ENCODE measurements at regions of chr4 and their contacts with region 1.

Region 1: GRCh38 chr4:151015459-151016347 is 619 bp upstream of the LRBA start:
- DNase-seq: no peak
- ATAC-seq: peak; percentile 80
- H3K4me3 ChIP-seq: peak overlapping the region; percentile 100
- H3K27ac ChIP-seq: peak overlapping the region; percentile 92
- H3K4me1 ChIP-seq: peaks cover 4% of the 10 kb centered on the region
- H3K27me3 ChIP-seq: no peaks in the 10 kb centered on the region
- CTCF ChIP-seq: no peak
- EP300 ChIP-seq: no peak
- POLR2A ChIP-seq: peak; percentile 96
- RAD21 ChIP-seq: no peak

Region 2: DNA sequence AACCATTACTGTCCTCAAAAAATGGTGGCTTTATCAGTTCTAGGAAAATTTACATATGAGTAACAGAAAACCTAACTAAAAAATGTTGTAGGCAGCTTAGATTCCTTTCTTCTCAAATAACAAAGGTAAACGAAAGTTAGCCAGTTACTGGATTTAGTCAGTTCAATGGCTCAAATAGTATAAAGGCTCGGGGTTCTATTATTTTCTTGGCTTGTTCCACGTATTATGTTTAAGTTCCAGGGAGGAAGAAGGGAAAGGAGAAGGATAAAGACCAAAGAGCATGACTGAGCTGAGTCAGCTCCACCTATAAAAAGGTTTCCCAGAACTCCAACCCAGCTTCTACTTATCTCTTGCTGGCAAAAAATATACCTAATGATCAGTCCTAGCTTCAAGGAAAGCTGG is 474.7 kb before region 1 on chr4:
- CTCF ChIA-PET with region 1: no interaction called
- POLR2A ChIA-PET with region 1: no interaction called
- RAD21 ChIA-PET with region 1: no interaction called
- SMC1A ChIA-PET with region 1: no interaction called
- in situ Hi-C with region 1: no loop called
- intact Hi-C with region 1: no loop called
- DNase-seq: no peak
- ATAC-seq: no peak
- H3K4me3 ChIP-seq: no peak overlapping the region
- H3K27ac ChIP-seq: no peak overlapping the region
- H3K4me1 ChIP-seq: no peaks in the 10 kb centered on the region
- H3K27me3 ChIP-seq: no peaks in the 10 kb centered on the region
- CTCF ChIP-seq: no peak
- EP300 ChIP-seq: no peak
- POLR2A ChIP-seq: no peak
- RAD21 ChIP-seq: no peak

Region 3: DNA sequence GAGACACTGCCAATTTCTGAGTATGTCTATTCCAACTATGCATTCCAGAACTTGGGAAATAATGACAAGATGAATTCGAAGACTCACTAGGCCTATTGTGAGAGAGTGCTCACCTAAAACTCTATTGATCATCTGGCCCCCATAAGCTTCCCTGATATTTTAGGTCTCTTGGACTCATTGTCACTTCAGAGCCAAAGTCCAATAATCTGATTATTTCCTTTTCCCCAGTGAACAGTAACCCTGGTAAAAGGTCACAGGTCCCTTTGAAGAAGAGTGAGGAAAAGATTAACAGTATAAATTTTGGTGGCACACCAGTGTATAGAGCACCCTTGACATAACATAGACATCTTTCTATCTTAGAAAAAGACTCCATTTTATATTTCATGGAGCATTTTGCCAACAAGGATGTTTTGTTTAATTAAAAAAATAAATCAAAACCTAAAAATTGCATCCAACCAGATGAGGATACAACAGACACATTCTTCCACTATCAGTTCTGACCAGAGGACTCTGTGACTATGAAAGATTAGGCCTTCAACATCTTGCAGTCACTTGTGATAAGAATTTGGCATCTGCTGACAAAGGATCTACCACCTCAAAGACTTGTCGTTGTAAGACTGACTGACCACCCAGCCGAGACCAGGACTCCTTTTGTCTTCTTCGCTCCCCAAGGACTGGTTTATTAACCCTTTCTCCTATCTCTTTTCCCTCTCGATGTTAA is 241.8 kb before region 1 on chr4:
- CTCF ChIA-PET with region 1: no interaction called
- POLR2A ChIA-PET with region 1: no interaction called
- RAD21 ChIA-PET with region 1: no interaction called
- SMC1A ChIA-PET with region 1: no interaction called
- in situ Hi-C with region 1: no loop called
- intact Hi-C with region 1: no loop called
- DNase-seq: no peak
- ATAC-seq: no peak
- H3K4me3 ChIP-seq: no peak overlapping the region
- H3K27ac ChIP-seq: no peak overlapping the region
- H3K4me1 ChIP-seq: no peaks in the 10 kb centered on the region
- H3K27me3 ChIP-seq: no peaks in the 10 kb centered on the region
- CTCF ChIP-seq: no peak
- EP300 ChIP-seq: no peak
- POLR2A ChIP-seq: no peak
- RAD21 ChIP-seq: no peak

Region 4: DNA sequence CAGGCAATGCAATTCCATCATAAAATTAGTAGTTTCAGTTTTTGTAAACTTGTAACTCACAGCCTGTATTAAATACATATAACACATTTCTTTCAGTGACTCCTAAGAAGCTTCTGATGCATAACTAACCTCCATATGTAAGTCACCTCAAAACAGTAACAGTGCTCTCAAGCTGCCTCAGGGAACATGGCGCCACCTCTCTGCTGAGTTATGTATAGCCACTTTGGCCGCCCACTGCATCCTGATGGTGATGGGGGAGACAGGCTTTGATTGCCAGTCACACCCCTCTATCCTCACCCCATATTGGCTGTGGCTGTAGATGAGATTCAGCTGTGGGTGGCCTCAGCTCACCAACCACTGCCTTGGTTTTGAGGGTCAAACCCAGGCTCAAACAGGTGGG is 54.9 kb before region 1 on chr4:
- CTCF ChIA-PET with region 1: interaction called, 21 read pairs
- POLR2A ChIA-PET with region 1: interaction called, 7 read pairs
- RAD21 ChIA-PET with region 1: interaction called, 36 read pairs
- SMC1A ChIA-PET with region 1: interaction called, 10 read pairs
- in situ Hi-C with region 1: no loop called
- intact Hi-C with region 1: no loop called
- DNase-seq: no peak
- ATAC-seq: peak; percentile 86
- H3K4me3 ChIP-seq: no peak overlapping the region
- H3K27ac ChIP-seq: no peak overlapping the region
- H3K4me1 ChIP-seq: peaks cover 3% of the 10 kb centered on the region
- H3K27me3 ChIP-seq: no peaks in the 10 kb centered on the region
- CTCF ChIP-seq: peak; percentile 34 to 47 (median 45); a peak in 5 of 6 replicates
- EP300 ChIP-seq: no peak
- POLR2A ChIP-seq: no peak
- RAD21 ChIP-seq: peak; percentile 46; the same call in 1 of the 2 replicates

Region 5: DNA sequence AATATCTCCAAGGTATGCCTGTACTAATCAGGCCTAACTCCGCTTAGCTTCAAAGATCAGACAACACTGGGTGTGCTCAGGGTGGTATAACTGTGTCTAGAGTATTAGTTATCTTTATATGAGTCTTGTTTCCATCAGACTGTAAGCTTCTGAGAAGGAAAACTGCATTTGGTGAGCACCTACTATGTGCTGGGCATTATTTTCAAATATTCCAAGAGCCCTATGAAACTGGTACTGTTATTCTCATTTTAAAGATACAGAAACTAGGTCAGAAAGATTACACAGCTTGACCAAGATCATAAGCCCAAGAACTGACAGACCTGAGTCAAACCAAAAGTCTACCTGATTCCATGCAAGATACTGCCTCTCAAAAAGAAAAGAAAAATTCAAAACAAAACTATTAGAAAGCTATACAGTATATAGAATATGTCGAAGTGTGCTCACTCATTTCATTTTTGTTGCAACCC is 45.0 kb before region 1 on chr4:
- CTCF ChIA-PET with region 1: interaction called, 3 read pairs
- POLR2A ChIA-PET with region 1: interaction called, 5 read pairs
- RAD21 ChIA-PET with region 1: interaction called, 5 read pairs
- SMC1A ChIA-PET with region 1: interaction called, 17 read pairs
- in situ Hi-C with region 1: no loop called
- intact Hi-C with region 1: no loop called
- DNase-seq: no peak
- ATAC-seq: peak; percentile 78
- H3K4me3 ChIP-seq: 0 out of 2 replicates have a peak overlapping the region, but pooled peaks have one; percentile 32
- H3K27ac ChIP-seq: no peak overlapping the region
- H3K4me1 ChIP-seq: peaks cover 29% of the 10 kb centered on the region
- H3K27me3 ChIP-seq: no peaks in the 10 kb centered on the region
- CTCF ChIP-seq: no peak
- EP300 ChIP-seq: no peak
- POLR2A ChIP-seq: no peak
- RAD21 ChIP-seq: no peak

Region 6: DNA sequence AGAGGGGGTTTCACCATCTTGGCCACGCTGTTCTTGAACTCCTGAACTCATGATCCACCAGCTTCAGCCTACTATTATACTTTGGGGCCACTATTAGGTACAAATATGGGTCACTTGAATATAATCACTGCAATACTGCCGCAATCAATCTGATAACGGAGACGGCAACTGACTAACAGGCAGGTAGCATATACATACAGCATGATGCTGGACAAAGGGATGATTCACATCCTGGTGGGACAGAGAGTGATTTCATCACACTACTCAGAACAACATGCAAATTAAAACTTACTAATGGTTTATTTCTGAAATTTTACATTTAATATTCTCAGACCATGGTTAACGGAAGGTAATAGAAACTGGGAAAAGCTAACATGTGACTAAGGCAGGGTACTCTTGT is 11.5 kb before region 1 on chr4:
- CTCF ChIA-PET with region 1: no interaction called
- POLR2A ChIA-PET with region 1: interaction called, 22 read pairs
- RAD21 ChIA-PET with region 1: interaction called, 3 read pairs
- SMC1A ChIA-PET with region 1: interaction called, 3 read pairs
- in situ Hi-C with region 1: no loop called
- intact Hi-C with region 1: no loop called
- DNase-seq: no peak
- ATAC-seq: peak; percentile 16
- H3K4me3 ChIP-seq: no peak overlapping the region
- H3K27ac ChIP-seq: no peak overlapping the region
- H3K4me1 ChIP-seq: peaks cover 2% of the 10 kb centered on the region; the same call in 1 of the 2 replicates
- H3K27me3 ChIP-seq: no peaks in the 10 kb centered on the region
- CTCF ChIP-seq: no peak
- EP300 ChIP-seq: no peak
- POLR2A ChIP-seq: no peak
- RAD21 ChIP-seq: no peak

Region 7: GRCh38 chr4:151031831-151032605 is 16.3 kb after region 1 on chr4:
- CTCF ChIA-PET with region 1: interaction called, 6 read pairs
- POLR2A ChIA-PET with region 1: interaction called, 41 read pairs
- RAD21 ChIA-PET with region 1: interaction called, 33 read pairs
- SMC1A ChIA-PET with region 1: interaction called, 31 read pairs
- in situ Hi-C with region 1: no loop called
- intact Hi-C with region 1: no loop called
- DNase-seq: peak; percentile 54
- ATAC-seq: peak; percentile 69
- H3K4me3 ChIP-seq: peak overlapping the region; percentile 38; the same call in 1 of the 2 replicates
- H3K27ac ChIP-seq: peak overlapping the region; percentile 60
- H3K4me1 ChIP-seq: peaks cover 18% of the 10 kb centered on the region
- H3K27me3 ChIP-seq: no peaks in the 10 kb centered on the region
- CTCF ChIP-seq: no peak
- EP300 ChIP-seq: peak; percentile 75 to 82; a peak in 2 of 4 replicates
- POLR2A ChIP-seq: no peak
- RAD21 ChIP-seq: no peak

Region 8: DNA sequence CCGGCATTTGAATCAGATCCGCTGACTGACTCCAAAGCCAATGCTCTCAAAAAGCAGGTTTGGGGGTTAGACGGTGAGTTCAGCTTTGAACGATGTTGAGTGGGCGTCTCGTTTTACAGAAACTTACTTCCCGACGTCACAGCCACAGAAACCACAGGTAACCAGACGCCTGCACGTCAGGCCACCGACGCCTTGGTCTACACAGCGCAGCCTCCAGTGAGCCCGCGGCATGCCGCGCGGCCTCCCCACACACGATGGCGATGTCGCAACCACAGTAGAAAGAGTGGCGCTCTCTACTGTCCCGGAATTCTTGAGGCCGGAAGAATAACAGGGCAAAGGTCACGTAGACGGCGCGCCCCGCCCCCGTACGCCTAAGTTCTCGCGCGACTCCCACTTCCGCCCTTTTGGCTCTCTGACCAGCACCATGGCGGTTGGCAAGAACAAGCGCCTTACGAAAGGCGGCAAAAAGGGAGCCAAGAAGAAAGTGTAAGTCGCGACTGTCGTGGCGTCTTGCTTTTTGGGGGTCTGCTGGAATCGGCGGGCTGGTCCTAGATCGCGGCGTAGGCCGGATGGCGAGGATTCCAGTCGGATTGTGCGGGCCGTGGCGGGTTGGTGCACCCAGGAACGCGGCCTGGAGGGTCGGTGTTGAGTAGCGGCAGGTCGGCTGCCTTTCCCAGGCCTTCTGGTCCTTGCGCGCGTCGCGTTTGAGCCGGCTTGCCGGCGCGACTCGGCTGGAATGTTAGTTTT is 83.7 kb after region 1 on chr4 and contains the start of gene RPS3A:
- CTCF ChIA-PET with region 1: interaction called, 7 read pairs
- POLR2A ChIA-PET with region 1: interaction called, 17 read pairs
- RAD21 ChIA-PET with region 1: interaction called, 6 read pairs
- SMC1A ChIA-PET with region 1: interaction called, 8 read pairs
- in situ Hi-C with region 1: no loop called
- intact Hi-C with region 1: loop called (anchors 1 kb)
- DNase-seq: peak; percentile 97
- ATAC-seq: peak; percentile 89
- H3K4me3 ChIP-seq: peak within 1 kb of the TSS; percentile 98
- H3K27ac ChIP-seq: peak within 1 kb of the TSS; percentile 78
- H3K4me1 ChIP-seq: peaks cover 23% of the 10 kb centered on the region
- H3K27me3 ChIP-seq: no peaks in the 10 kb centered on the region
- CTCF ChIP-seq: peak; percentile 75 to 90 (median 83)
- EP300 ChIP-seq: peak; percentile 89 to 91
- POLR2A ChIP-seq: peak; percentile 100
- RAD21 ChIP-seq: peak; percentile 35
- polyA plus RNA-seq, gene RPS3A: 5,081 to 5,756 TPM

Region 9: GRCh38 chr4:151184523-151185458 is 169.1 kb after region 1 on chr4:
- CTCF ChIA-PET with region 1: no interaction called
- POLR2A ChIA-PET with region 1: no interaction called
- RAD21 ChIA-PET with region 1: no interaction called
- SMC1A ChIA-PET with region 1: no interaction called
- in situ Hi-C with region 1: no loop called
- intact Hi-C with region 1: no loop called
- DNase-seq: no peak
- ATAC-seq: no peak
- H3K4me3 ChIP-seq: no peak overlapping the region
- H3K27ac ChIP-seq: no peak overlapping the region
- H3K4me1 ChIP-seq: no peaks in the 10 kb centered on the region
- H3K27me3 ChIP-seq: peaks cover 0 to 1% of the 10 kb centered on the region in 2 experiments; a peak in 2 of 4 replicates
- CTCF ChIP-seq: no peak
- EP300 ChIP-seq: no peak
- POLR2A ChIP-seq: no peak
- RAD21 ChIP-seq: no peak